IMR-90 (cell line): ENCODE measurements at regions of chr9 and their contacts with region 1.

Region 1: GRCh38 chr9:99184475-99185347 is 37.0 kb downstream of the ALG2 start:
- DNase-seq: peak; percentile 93
- ATAC-seq: peak; percentile 94
- H3K4me3 ChIP-seq: no peak overlapping the region
- H3K27ac ChIP-seq: no peak overlapping the region
- H3K4me1 ChIP-seq: peaks cover 5% of the 10 kb centered on the region
- H3K27me3 ChIP-seq: peaks cover 6% of the 10 kb centered on the region
- CTCF ChIP-seq: peak; percentile 92
- POLR2A ChIP-seq: no peak
- RAD21 ChIP-seq: peak; percentile 91

Region 2: GRCh38 chr9:99266255-99267023 is 81.7 kb after region 1 on chr9:
- CTCF ChIA-PET with region 1: no interaction called
- POLR2A ChIA-PET with region 1: no interaction called
- dilution Hi-C with region 1: no loop called
- in situ Hi-C with region 1: no loop called
- intact Hi-C with region 1: loop called (anchors 10 kb)
- DNase-seq: peak; percentile 68
- ATAC-seq: peak; percentile 81
- H3K4me3 ChIP-seq: no peak overlapping the region
- H3K27ac ChIP-seq: no peak overlapping the region
- H3K4me1 ChIP-seq: peaks cover 2% of the 10 kb centered on the region; the same call in 1 of the 2 replicates
- H3K27me3 ChIP-seq: no peaks in the 10 kb centered on the region
- CTCF ChIP-seq: peak; percentile 84
- POLR2A ChIP-seq: 0 out of 2 replicates have a peak, but pooled peaks have one; percentile 23
- RAD21 ChIP-seq: peak; percentile 96

Region 3: GRCh38 chr9:100011062-100011681 is 826.5 kb after region 1 on chr9:
- CTCF ChIA-PET with region 1: no interaction called
- POLR2A ChIA-PET with region 1: no interaction called
- dilution Hi-C with region 1: no loop called
- in situ Hi-C with region 1: loop called (anchors 10 kb)
- intact Hi-C with region 1: loop called (anchors 5 kb)
- DNase-seq: peak; percentile 67
- ATAC-seq: no peak
- H3K4me3 ChIP-seq: no peak overlapping the region
- H3K27ac ChIP-seq: no peak overlapping the region
- H3K4me1 ChIP-seq: peaks cover 7% of the 10 kb centered on the region
- H3K27me3 ChIP-seq: no peaks in the 10 kb centered on the region
- CTCF ChIP-seq: peak; percentile 60
- POLR2A ChIP-seq: no peak
- RAD21 ChIP-seq: peak; percentile 66

Region 4: GRCh38 chr9:100216178-100216787 is 1031.6 kb after region 1 on chr9:
- CTCF ChIA-PET with region 1: no interaction called
- POLR2A ChIA-PET with region 1: no interaction called
- dilution Hi-C with region 1: no loop called
- in situ Hi-C with region 1: no loop called
- intact Hi-C with region 1: loop called (anchors 5 kb)
- DNase-seq: peak; percentile 45
- ATAC-seq: 0 out of 2 replicates have a peak, but pooled peaks have one; percentile 22
- H3K4me3 ChIP-seq: no peak overlapping the region
- H3K27ac ChIP-seq: no peak overlapping the region
- H3K4me1 ChIP-seq: peaks cover 6% of the 10 kb centered on the region
- H3K27me3 ChIP-seq: no peaks in the 10 kb centered on the region
- CTCF ChIP-seq: peak; percentile 56
- POLR2A ChIP-seq: no peak
- RAD21 ChIP-seq: peak; percentile 63

Region 5: GRCh38 chr9:100426530-100427428 is 1242.1 kb after region 1 on chr9 and contains the start of gene MSANTD3:
- CTCF ChIA-PET with region 1: no interaction called
- POLR2A ChIA-PET with region 1: no interaction called
- dilution Hi-C with region 1: no loop called
- in situ Hi-C with region 1: no loop called
- intact Hi-C with region 1: loop called (anchors 10 kb)
- DNase-seq: peak; percentile 76
- ATAC-seq: peak; percentile 64
- H3K4me3 ChIP-seq: peak within 1 kb of the TSS; percentile 66
- H3K27ac ChIP-seq: peak within 1 kb of the TSS; percentile 95
- H3K4me1 ChIP-seq: peaks cover 17% of the 10 kb centered on the region
- H3K27me3 ChIP-seq: no peaks in the 10 kb centered on the region
- CTCF ChIP-seq: peak; percentile 31
- POLR2A ChIP-seq: peak; percentile 90
- RAD21 ChIP-seq: no peak; the same call in 1 of the 2 replicates
- total RNA-seq, gene MSANTD3: 55.9 and 71.1 TPM in 2 replicates